ENCODE measurements at regions of chr12 and their contacts with region 1.

Region 1: DNA sequence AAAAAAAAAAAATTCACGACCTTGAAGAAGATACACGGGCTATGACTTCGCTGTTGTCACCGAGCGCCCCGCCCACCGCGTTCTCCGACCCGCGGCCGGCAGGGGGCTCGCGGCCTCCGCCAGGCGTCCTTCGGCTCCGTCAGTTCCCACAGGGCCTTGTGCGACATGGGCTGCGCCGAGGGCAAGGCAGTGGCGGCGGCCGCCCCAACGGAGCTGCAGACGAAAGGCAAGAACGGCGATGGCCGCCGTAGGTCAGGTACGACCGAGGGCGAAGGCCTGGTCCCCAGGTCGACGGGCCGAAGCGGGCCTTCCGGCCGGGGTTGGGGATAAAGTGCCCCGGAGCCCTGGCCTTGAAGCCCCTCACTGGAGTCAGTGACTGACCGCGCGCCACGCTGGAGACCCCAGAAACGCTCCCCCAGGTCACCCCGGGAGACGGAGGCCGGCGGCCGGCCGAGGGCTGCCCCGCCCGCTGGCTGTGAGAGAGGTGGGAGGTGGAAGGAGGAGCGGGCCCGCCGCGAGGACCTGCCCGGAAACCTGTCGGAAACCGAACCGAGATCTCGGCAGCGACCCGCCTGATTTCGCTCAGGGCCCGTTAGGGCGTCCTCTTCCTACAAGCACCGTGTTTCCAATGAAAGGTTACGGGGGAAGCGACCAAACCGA is at the start of gene TXNRD1:
- DNase-seq: peak; percentile 87 to 94
- H3K4me3 ChIP-seq: peak within 1 kb of the TSS; percentile 50 to 64 (median 60)
- H3K27ac ChIP-seq: peak within 1 kb of the TSS in 4 of 5 donors; percentile 70 to 93 (median 84)
- H3K4me1 ChIP-seq: peaks cover 18 to 48% (median 36%) of the 10 kb centered on the region in 4 donors
- H3K27me3 ChIP-seq: no peaks in the 10 kb centered on the region
- CTCF ChIP-seq: peak in 6 of 7 experiments; percentile 52 to 87 (median 80)
- EP300 ChIP-seq: no peak
- POLR2A ChIP-seq: no peak
- total RNA-seq, gene TXNRD1: 61.8 to 208 (median 89.5) TPM

Region 2: DNA sequence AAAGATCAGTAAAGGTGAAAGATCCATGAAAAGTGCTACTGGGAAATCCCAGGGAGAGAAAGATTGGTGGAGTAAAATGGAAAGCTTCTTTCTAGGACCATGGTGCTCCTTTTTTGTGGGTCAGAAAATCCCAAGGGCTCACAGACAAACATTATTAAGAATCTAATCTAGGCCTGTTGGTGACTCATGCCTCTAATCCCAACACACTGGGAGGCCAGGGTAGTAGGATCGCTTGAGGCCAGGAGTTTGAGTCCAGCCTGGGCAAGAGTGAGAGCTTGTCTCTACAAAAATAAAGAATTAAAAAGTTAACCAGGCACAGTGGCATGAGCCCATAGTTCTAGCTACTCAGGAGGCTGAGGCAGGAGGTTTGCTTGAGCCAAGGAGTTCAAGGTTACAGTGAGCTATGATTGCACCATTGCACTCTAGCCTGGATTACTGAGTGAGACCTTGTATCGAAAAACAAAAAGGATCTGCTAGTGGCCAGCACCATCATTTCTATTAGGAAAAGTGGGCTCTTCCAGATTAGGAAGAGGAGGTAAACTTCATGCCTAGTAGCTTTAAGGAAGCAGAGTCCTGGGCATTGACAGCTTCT is 42.8 kb after region 1 on chr12:
- intact Hi-C with region 1: no loop called
- DNase-seq: no peak
- H3K4me3 ChIP-seq: no peak overlapping the region
- H3K27ac ChIP-seq: peak overlapping the region in 2 of 5 donors; percentile 30 to 51
- H3K4me1 ChIP-seq: peaks cover 0 to 5% (median 2%) of the 10 kb centered on the region in 4 donors
- H3K27me3 ChIP-seq: no peaks in the 10 kb centered on the region
- CTCF ChIP-seq: no peak
- EP300 ChIP-seq: no peak
- POLR2A ChIP-seq: no peak

Region 3: DNA sequence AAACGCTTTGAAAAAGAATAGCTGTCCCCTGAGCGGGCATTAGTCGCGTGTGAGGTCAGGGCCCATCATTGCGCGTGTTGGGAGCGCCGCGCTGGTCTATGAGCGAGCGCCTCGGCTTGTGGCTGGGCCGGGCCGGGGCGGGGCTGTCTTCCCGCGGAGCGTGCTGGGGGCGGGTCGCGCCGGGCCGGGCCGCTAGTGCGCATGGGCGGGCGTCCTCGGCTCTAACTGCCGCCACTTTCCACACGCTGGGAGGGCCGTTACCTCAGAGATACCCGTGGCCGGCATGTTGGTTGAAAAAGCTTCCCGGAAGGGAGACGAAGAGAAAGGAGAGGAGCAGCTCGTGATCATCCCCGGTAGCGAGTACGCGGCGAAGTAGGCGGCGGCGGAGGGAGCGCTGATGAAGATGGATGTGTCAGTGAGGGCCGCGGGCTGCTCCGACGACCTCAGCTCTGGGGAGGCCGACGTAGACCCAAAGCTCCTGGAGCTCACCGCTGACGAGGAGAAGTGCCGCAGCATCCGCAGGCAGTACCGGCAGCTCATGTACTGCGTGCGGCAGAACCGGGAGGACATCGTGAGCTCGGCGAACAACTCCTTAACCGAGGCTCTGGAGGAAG is 87.9 kb after region 1 on chr12 and contains the start of gene EID3:
- intact Hi-C with region 1: loop called (anchors 10 kb)
- DNase-seq: peak; percentile 91 to 96
- H3K4me3 ChIP-seq: peak within 1 kb of the TSS; percentile 41 to 56 (median 53)
- H3K27ac ChIP-seq: peak within 1 kb of the TSS; percentile 69 to 89 (median 80)
- H3K4me1 ChIP-seq: peaks cover 23 to 95% (median 68%) of the 10 kb centered on the region in 4 donors
- H3K27me3 ChIP-seq: no peaks in the 10 kb centered on the region
- CTCF ChIP-seq: no peak
- EP300 ChIP-seq: peak; percentile 36
- POLR2A ChIP-seq: no peak
- total RNA-seq, gene EID3: 14.7 to 78.1 (median 26.7) TPM

Region 4: GRCh38 chr12:104399740-104400612 is 184.2 kb after region 1 on chr12:
- intact Hi-C with region 1: no loop called
- DNase-seq: no peak
- H3K4me3 ChIP-seq: no peak overlapping the region
- H3K27ac ChIP-seq: no peak overlapping the region
- H3K4me1 ChIP-seq: no peaks in the 10 kb centered on the region
- H3K27me3 ChIP-seq: no peaks in the 10 kb centered on the region
- CTCF ChIP-seq: no peak
- EP300 ChIP-seq: no peak
- POLR2A ChIP-seq: no peak

Region 5: DNA sequence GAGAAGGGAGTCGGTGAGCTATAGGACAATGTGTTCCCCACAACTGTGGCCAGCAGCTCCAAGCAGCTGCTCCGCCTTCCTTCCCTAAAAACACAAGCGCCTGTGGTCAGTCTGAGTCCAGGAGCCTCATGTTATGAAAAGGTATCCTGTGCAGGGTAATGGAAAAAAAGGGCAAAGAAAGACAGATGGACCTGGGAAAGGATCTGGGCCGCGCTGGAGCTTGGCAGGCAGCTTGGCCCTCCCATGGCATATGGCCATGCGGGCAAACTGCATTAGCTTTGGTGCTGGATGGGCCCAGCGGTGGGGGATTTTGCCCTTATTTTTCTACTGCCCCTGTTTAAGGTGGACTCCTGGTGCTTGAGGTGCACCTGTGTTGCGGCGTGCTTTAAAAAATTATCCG is 217.3 kb after region 1 on chr12:
- intact Hi-C with region 1: no loop called
- DNase-seq: no peak
- H3K4me3 ChIP-seq: no peak overlapping the region
- H3K27ac ChIP-seq: no peak overlapping the region
- H3K4me1 ChIP-seq: no peaks in the 10 kb centered on the region
- H3K27me3 ChIP-seq: no peaks in the 10 kb centered on the region
- CTCF ChIP-seq: no peak
- EP300 ChIP-seq: no peak
- POLR2A ChIP-seq: no peak